ENCODE measurements at regions of chr15 and their contacts with region 1.

Region 1: DNA sequence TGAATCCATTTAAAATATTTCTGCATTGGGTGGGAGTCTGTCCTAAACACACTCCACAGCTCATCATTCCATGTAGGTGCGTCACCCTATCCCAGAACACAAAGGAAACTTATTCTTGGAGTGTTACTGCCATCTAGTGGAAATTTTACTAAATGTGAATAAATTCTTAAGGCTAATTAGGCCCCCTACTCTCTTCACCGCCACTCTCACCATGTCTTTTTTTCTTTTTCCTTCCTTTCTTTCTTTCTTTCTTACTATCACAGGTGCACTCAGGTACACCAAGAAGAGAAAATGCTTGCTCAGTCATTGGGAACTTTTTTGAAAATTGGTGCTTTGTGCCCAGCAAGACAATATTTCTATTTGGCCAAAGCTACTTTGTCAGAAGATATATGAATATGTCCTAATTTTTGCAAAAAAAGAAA is 26.4 kb upstream of the ATP8B4 start:
- DNase-seq: peak; percentile 67
- H3K4me3 ChIP-seq: no peak overlapping the region; a peak in 1 of 4 replicates
- H3K27ac ChIP-seq: no peak overlapping the region
- H3K4me1 ChIP-seq: no peaks in the 10 kb centered on the region; a peak in 1 of 4 replicates
- H3K27me3 ChIP-seq: no peaks in the 10 kb centered on the region
- CTCF ChIP-seq: peak; percentile 70
- EP300 ChIP-seq: no peak
- RAD21 ChIP-seq: peak; percentile 84

Region 2: GRCh38 chr15:48855501-48856440 is 1289.7 kb before region 1 on chr15:
- CTCF ChIA-PET with region 1: interaction called, 26 read pairs
- POLR2A ChIA-PET with region 1: no interaction called
- DNase-seq: no peak
- H3K4me3 ChIP-seq: no peak overlapping the region
- H3K27ac ChIP-seq: peak overlapping the region; percentile 44 to 50
- H3K4me1 ChIP-seq: peaks cover 16 to 24% of the 10 kb centered on the region in 2 experiments; a peak in 3 of 4 replicates
- H3K27me3 ChIP-seq: no peaks in the 10 kb centered on the region
- CTCF ChIP-seq: peak; percentile 66
- EP300 ChIP-seq: no peak
- RAD21 ChIP-seq: peak; percentile 70

Region 3: GRCh38 chr15:50046867-50047266 is 98.6 kb before region 1 on chr15:
- CTCF ChIA-PET with region 1: interaction called, 12 read pairs
- POLR2A ChIA-PET with region 1: no interaction called
- DNase-seq: peak; percentile 33
- H3K4me3 ChIP-seq: no peak overlapping the region
- H3K27ac ChIP-seq: no peak overlapping the region; a peak in 1 of 4 replicates
- H3K4me1 ChIP-seq: peaks cover 0 to 2% of the 10 kb centered on the region in 2 experiments; a peak in 2 of 4 replicates
- H3K27me3 ChIP-seq: no peaks in the 10 kb centered on the region
- CTCF ChIP-seq: no peak
- EP300 ChIP-seq: peak in 1 of 2 experiments; percentile 19; a peak in 1 of 4 replicates
- RAD21 ChIP-seq: no peak

Region 4: GRCh38 chr15:50134520-50135024 is 10.9 kb before region 1 on chr15:
- CTCF ChIA-PET with region 1: interaction called, 12 read pairs
- POLR2A ChIA-PET with region 1: no interaction called
- DNase-seq: no peak
- H3K4me3 ChIP-seq: no peak overlapping the region
- H3K27ac ChIP-seq: no peak overlapping the region
- H3K4me1 ChIP-seq: no peaks in the 10 kb centered on the region
- H3K27me3 ChIP-seq: no peaks in the 10 kb centered on the region
- CTCF ChIP-seq: no peak
- EP300 ChIP-seq: no peak
- RAD21 ChIP-seq: no peak

Region 5: GRCh38 chr15:50315814-50316630 is 170.6 kb after region 1 on chr15:
- CTCF ChIA-PET with region 1: interaction called, 10 read pairs
- POLR2A ChIA-PET with region 1: no interaction called
- DNase-seq: peak; percentile 45
- H3K4me3 ChIP-seq: peak overlapping the region in 1 of 2 experiments; percentile 44; a peak in 1 of 4 replicates
- H3K27ac ChIP-seq: no peak overlapping the region
- H3K4me1 ChIP-seq: no peaks in the 10 kb centered on the region
- H3K27me3 ChIP-seq: no peaks in the 10 kb centered on the region
- CTCF ChIP-seq: peak; percentile 87
- EP300 ChIP-seq: no peak
- RAD21 ChIP-seq: peak; percentile 79

Measured in SK-N-SH (cell line).